Dorsolateral prefrontal cortex (tissue), 120 donors: ENCODE measurements at regions of chr6 and their contacts with region 1.

Region 1: DNA sequence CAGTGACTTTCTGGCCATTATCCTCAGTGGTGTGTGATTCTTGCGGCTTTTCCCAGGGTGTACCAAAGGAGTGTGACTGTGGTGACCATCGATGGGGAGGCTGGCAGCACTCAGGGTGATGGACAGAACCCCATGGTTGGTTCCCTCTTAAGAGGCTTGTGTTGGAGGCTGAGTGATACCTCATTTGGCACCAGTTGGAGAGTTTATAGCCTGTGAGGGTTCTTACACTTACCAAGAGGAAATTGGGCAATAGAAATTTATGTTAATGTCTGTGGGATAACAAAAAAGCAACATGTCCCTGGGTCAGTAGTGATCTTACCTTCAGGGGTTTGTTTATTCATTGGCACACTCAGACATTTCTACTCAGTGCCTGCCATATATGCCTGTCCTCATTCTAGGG is 37.2 kb downstream of the DAAM2 start:
- DNase-seq: no peak
- H3K4me3 ChIP-seq: no peak overlapping the region
- H3K27ac ChIP-seq: peak overlapping the region in 55 of 59 donors; percentile 3 to 96 (median 80)
- H3K27me3 ChIP-seq: no peaks in the 10 kb centered on the region
- CTCF ChIP-seq: no peak

Region 2: GRCh38 chr6:39777218-39777617 is 52.1 kb before region 1 on chr6:
- intact Hi-C with region 1: no loop called
- DNase-seq: no peak
- H3K4me3 ChIP-seq: peak overlapping the region in 1 of 59 donors; percentile 18
- H3K27ac ChIP-seq: peak overlapping the region in 51 of 59 donors; percentile 2 to 79 (median 53)
- H3K27me3 ChIP-seq: no peaks in the 10 kb centered on the region
- CTCF ChIP-seq: no peak

Region 3: DNA sequence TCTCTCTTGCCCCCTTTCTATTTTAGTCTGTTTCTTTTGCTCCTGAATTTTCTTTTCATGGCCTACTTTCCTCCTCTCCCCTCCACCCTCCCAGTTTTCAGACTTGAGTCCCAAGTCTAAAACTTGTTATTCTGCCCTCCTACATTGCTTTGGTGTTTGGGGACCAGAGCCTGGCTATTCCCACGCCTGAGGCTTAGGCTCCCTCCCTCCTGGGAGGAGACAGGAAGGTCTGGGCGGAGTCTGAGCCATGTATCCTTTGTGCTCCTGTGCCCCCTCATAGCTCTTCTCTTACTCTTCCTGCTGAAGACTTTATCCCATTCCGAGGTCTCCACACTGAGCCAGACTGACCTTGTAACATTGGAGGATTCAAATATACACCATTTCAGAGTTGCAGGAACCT is 32.3 kb after region 1 on chr6:
- intact Hi-C with region 1: loop called in 1 of 2 experiments (anchors 5 kb)
- DNase-seq: no peak
- H3K4me3 ChIP-seq: no peak overlapping the region
- H3K27ac ChIP-seq: peak overlapping the region in 47 of 59 donors; percentile 6 to 89 (median 68)
- H3K27me3 ChIP-seq: no peaks in the 10 kb centered on the region
- CTCF ChIP-seq: no peak